PC-9 (cell line): ENCODE measurements at regions of chr15 and their contacts with region 1.

Region 1: GRCh38 chr15:63945007-63945788 is 101.1 kb downstream of the DAPK2 start:
- DNase-seq: peak; percentile 38 to 79
- H3K4me3 ChIP-seq: no peak overlapping the region; the same call in 1 of the 2 replicates
- H3K27ac ChIP-seq: peak overlapping the region; percentile 68
- H3K4me1 ChIP-seq: peaks cover 12% of the 10 kb centered on the region
- H3K27me3 ChIP-seq: no peaks in the 10 kb centered on the region
- CTCF ChIP-seq: peak; percentile 89

Region 2: GRCh38 chr15:63626955-63627354 is 318.2 kb before region 1 on chr15:
- CTCF ChIA-PET with region 1: no interaction called
- POLR2A ChIA-PET with region 1: interaction called, 15 read pairs
- intact Hi-C with region 1: no loop called
- DNase-seq: no peak
- H3K4me3 ChIP-seq: no peak overlapping the region
- H3K27ac ChIP-seq: no peak overlapping the region
- H3K4me1 ChIP-seq: no peaks in the 10 kb centered on the region
- H3K27me3 ChIP-seq: no peaks in the 10 kb centered on the region
- CTCF ChIP-seq: no peak

Region 3: GRCh38 chr15:63826528-63826927 is 118.7 kb before region 1 on chr15:
- CTCF ChIA-PET with region 1: interaction called, 7 read pairs
- POLR2A ChIA-PET with region 1: no interaction called
- intact Hi-C with region 1: loop called (anchors 2 kb)
- DNase-seq: no peak
- H3K4me3 ChIP-seq: no peak overlapping the region
- H3K27ac ChIP-seq: no peak overlapping the region
- H3K4me1 ChIP-seq: no peaks in the 10 kb centered on the region
- H3K27me3 ChIP-seq: no peaks in the 10 kb centered on the region
- CTCF ChIP-seq: peak; percentile 38

Region 4: GRCh38 chr15:63983061-63983711 is 38.0 kb after region 1 on chr15:
- CTCF ChIA-PET with region 1: no interaction called
- POLR2A ChIA-PET with region 1: no interaction called
- intact Hi-C with region 1: no loop called
- DNase-seq: no peak
- H3K4me3 ChIP-seq: no peak overlapping the region
- H3K27ac ChIP-seq: no peak overlapping the region
- H3K4me1 ChIP-seq: no peaks in the 10 kb centered on the region
- H3K27me3 ChIP-seq: no peaks in the 10 kb centered on the region
- CTCF ChIP-seq: no peak

Region 5: DNA sequence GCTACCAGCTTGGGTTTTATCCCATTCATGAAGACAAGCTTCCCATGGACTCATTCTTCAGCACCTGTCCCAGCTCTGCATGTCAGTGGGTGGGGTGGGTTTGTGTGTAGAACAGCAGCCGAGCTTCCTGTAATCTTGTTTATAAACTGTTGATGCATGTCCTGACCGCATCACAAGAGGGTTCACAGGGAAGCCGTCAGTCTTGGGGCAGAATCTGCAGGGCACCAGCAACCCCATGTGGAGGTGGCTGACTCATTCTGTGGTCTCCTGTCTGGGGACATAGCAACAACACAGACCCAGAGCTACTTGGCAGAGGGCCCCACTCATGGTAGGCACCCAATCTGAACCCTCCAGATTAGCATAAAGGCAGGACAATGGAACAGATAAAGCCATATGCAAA is 65.5 kb after region 1 on chr15:
- CTCF ChIA-PET with region 1: interaction called, 6 read pairs
- POLR2A ChIA-PET with region 1: no interaction called
- intact Hi-C with region 1: loop called (anchors 5 kb)
- DNase-seq: peak; percentile 49 to 83
- H3K4me3 ChIP-seq: no peak overlapping the region
- H3K27ac ChIP-seq: no peak overlapping the region
- H3K4me1 ChIP-seq: peaks cover 57% of the 10 kb centered on the region
- H3K27me3 ChIP-seq: no peaks in the 10 kb centered on the region
- CTCF ChIP-seq: no peak

Region 6: DNA sequence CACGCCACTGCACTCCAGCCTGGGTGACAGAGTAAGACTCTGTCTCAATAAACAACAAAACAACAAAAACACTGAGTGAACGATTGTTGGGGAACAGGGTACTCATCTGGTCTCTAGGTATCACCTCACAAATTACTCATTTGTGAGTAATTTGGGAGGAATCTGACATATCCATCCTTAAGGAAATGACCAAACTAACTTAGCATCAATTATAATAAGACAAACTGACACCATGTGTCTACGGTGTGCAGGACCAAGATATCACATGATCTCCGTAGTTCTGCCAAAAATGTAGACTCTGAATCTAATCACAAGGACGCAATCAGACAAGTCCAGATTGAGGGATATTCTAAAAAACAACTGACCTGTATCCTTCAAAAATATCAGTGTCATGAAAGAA is 113.1 kb after region 1 on chr15:
- CTCF ChIA-PET with region 1: no interaction called
- POLR2A ChIA-PET with region 1: interaction called, 10 read pairs
- intact Hi-C with region 1: loop called (anchors 1 kb)
- DNase-seq: no peak
- H3K4me3 ChIP-seq: no peak overlapping the region
- H3K27ac ChIP-seq: no peak overlapping the region
- H3K4me1 ChIP-seq: no peaks in the 10 kb centered on the region
- H3K27me3 ChIP-seq: no peaks in the 10 kb centered on the region
- CTCF ChIP-seq: no peak

Region 7: DNA sequence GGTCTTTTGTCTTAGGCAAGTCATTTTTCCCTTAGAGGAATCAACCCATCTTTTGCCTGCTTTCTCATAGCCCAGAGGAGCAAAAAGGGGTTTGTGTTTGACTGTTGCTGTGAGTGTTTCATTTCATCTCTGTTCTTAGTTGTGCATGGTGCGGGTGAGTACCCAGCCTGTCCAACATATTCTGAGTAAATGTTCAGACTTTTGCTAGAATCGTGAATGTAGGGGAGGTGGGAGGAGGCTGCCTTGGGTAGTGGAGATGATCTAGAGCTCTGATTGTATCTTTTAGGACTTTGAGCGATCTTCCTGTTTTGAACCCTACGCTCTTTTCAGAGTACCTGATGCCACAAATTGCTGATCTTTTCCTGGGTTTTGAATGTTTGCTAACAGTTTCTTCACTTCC is 638.3 kb after region 1 on chr15:
- CTCF ChIA-PET with region 1: no interaction called
- POLR2A ChIA-PET with region 1: no interaction called
- intact Hi-C with region 1: no loop called
- DNase-seq: no peak
- H3K4me3 ChIP-seq: no peak overlapping the region
- H3K27ac ChIP-seq: no peak overlapping the region
- H3K4me1 ChIP-seq: no peaks in the 10 kb centered on the region
- H3K27me3 ChIP-seq: no peaks in the 10 kb centered on the region
- CTCF ChIP-seq: no peak